Right ventricle myocardium inferior (tissue), 1 donor: ENCODE measurements at regions of chr1 and their contacts with region 1.

Region 1: GRCh38 chr1:184563308-184563707 is 176.5 kb downstream of the C1orf21 start:
- DNase-seq: no peak
- ATAC-seq: peak; percentile 47

Region 2: GRCh38 chr1:184222652-184223052 is 340.7 kb before region 1 on chr1:
- intact Hi-C with region 1: no loop called
- DNase-seq: no peak
- ATAC-seq: peak; percentile 59

Region 3: DNA sequence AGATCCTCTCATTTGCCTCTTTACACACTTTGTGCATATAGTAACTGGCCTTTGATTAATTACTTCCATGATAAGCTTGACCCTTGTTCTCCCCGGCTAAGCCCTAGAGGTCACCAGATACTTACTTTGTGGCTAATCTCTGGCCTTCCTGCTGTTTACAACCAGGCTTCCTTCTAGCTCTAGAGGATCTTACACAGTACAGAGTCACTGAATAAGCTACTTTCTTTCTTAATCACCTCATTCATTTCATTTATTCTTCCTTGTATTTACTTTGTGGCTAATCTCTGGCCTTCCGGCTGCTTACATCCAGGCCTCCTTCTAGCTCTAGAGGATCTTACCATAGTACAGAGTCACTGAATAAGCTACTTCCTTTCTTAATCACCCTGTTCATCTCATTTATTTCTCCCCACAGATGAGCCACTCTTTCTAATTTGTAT is 320.8 kb before region 1 on chr1:
- intact Hi-C with region 1: loop called (anchors 2 kb)
- DNase-seq: no peak
- ATAC-seq: peak; percentile 84

Region 4: DNA sequence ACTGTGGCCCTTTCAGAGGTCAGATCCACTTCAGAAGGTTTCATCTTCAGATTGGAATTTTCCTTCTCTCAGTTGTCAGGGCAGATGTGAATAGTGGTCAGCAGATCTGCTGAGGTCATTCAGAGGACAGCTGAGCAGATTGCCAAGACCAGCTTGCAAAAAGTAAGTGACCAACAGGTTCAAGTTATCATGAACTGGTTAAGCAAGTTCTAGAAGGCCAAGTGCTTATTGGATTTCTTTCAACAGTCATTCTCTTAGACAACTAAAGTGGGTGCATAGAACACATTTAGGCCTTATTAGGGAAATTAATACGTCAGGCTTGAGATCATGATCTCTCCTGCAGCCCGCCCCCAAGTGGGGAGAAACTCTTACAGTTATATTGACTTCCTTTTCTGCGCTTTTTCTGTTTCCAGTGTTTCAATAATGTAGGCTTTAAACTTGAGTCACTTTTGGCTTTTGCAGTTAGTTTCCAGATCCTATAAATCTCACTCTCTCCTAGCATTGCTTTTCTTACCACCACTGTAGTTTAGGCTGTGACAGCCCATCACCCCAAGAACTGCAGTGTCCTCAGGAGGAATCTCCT is 80.1 kb before region 1 on chr1:
- intact Hi-C with region 1: loop called (anchors 5 kb)
- DNase-seq: no peak
- ATAC-seq: peak; percentile 65

Region 5: GRCh38 chr1:184507604-184508280 is 55.6 kb before region 1 on chr1:
- intact Hi-C with region 1: loop called (anchors 5 kb)
- DNase-seq: no peak
- ATAC-seq: no peak